Activated T-helper 2 cell treated with anti-CD3 and anti-CD28 coated beads, Interferon-gamma antibody, Interleukin-2, Interleukin-4, amounts not matched to agents 10 μg/mL and 5 μg/mL and 100 μg/mL, durations not matched to agents 14 hours and 24 hours and 36 hours (primary cell): ENCODE measurements at regions of chr12 and their contacts with region 1.

Region 1: DNA sequence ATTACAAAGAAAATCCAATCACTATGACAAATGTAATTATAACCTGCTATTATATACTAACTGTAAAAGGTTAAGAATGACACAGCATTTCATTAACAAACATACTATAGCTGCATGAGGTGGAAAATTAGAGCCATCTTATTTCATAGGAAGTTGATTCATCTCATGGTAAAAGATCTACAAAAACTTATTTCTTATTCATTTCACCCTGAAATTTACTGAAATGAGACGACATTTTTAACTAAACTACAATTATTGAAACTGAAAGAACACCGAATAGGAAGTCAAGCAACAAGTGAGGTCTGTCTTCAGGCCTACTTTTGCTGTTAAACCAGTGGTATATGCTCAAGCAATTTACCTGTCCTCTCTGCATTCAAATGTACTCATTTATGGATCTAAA is 87.2 kb downstream of the CEP83 start:
- DNase-seq: no peak
- H3K4me3 Mint-ChIP-seq: peak overlapping the region; percentile 13
- H3K27ac Mint-ChIP-seq: peak overlapping the region; percentile 74
- H3K4me1 Mint-ChIP-seq: peaks cover 41% of the 10 kb centered on the region
- H3K27me3 Mint-ChIP-seq: no peaks in the 10 kb centered on the region

Region 2: DNA sequence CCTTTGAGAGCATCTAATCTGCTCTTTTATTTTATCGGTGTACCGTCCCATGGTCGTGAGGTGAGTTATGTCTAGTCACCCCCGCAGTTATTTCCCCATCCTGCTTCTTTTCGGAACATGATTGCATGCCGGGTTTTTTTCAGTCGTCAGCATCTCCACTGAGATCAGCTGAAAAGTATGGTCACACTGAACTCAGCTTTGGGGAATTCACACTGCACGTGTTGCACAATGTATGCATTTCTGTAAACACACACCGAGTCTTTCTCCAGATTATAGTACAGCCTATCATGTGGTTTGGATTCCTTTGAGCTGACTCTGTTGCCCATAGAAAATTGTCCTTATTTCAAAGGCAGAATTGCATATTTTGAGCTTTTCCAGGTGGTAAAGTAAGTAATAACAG is 199.5 kb before region 1 on chr12:
- intact Hi-C with region 1: loop called (anchors 10 kb)
- DNase-seq: no peak
- H3K4me3 Mint-ChIP-seq: no peak overlapping the region
- H3K27ac Mint-ChIP-seq: no peak overlapping the region
- H3K4me1 Mint-ChIP-seq: peaks cover 58% of the 10 kb centered on the region
- H3K27me3 Mint-ChIP-seq: no peaks in the 10 kb centered on the region

Region 3: DNA sequence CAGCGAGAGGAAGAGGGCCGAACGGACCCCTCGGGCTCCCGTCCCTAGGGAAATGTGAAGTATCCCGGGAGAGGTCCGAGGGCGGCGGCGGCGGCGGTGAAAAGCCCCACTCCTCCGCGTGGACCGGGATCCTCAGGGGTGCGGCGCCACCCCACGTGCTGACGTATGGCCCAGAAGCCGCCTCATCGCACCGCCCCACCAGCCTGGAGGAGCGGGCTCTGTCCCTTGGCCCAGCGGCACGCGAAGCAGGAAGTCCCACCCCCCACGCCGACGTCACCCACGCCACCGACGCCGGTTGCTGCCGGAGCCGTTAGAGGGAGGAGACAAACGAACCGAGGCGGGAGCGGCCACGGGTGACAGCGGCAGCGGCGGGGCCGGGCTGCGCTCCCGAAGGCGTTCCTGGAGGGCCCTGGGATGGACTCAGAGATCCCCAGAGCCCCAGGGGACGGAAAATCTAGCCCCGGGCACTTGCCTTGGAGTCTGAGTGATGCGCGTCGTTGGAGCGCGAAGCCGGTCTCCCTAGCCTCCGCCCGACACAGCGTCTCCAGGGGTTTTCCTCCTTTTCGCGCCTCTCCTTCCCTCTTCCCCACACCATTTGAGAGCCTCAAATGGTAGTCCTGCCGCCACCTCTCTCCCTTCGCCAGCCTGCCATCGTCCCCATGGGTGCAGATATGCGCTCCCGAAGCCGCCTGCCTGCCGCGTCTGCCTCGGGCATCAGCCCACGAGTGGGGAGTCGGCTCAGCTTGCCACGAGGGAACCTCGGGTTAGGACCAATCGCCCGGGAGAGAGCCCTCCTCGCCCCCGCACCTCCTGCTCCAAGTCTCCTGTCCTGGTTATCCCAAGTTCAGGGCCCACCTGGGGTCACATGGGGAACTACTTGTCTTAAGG is 87.5 kb after region 1 on chr12 and contains the start of gene CEP83:
- intact Hi-C with region 1: loop called (anchors 2 kb)
- DNase-seq: peak; percentile 95
- H3K4me3 Mint-ChIP-seq: peak within 1 kb of the TSS; percentile 88
- H3K27ac Mint-ChIP-seq: peak within 1 kb of the TSS; percentile 92
- H3K4me1 Mint-ChIP-seq: peaks cover 27% of the 10 kb centered on the region
- H3K27me3 Mint-ChIP-seq: peaks cover 5% of the 10 kb centered on the region
- total RNA-seq, gene CEP83: 32.4 and 35.9 TPM in 2 replicates

Region 4: GRCh38 chr12:94516985-94517384 is 144.5 kb after region 1 on chr12:
- intact Hi-C with region 1: no loop called
- DNase-seq: no peak
- H3K4me3 Mint-ChIP-seq: no peak overlapping the region
- H3K27ac Mint-ChIP-seq: no peak overlapping the region
- H3K4me1 Mint-ChIP-seq: peaks cover 4% of the 10 kb centered on the region
- H3K27me3 Mint-ChIP-seq: peaks cover 5% of the 10 kb centered on the region